PC-9 (cell line): ENCODE measurements at regions of chr7 and their contacts with region 1.

Region 1: DNA sequence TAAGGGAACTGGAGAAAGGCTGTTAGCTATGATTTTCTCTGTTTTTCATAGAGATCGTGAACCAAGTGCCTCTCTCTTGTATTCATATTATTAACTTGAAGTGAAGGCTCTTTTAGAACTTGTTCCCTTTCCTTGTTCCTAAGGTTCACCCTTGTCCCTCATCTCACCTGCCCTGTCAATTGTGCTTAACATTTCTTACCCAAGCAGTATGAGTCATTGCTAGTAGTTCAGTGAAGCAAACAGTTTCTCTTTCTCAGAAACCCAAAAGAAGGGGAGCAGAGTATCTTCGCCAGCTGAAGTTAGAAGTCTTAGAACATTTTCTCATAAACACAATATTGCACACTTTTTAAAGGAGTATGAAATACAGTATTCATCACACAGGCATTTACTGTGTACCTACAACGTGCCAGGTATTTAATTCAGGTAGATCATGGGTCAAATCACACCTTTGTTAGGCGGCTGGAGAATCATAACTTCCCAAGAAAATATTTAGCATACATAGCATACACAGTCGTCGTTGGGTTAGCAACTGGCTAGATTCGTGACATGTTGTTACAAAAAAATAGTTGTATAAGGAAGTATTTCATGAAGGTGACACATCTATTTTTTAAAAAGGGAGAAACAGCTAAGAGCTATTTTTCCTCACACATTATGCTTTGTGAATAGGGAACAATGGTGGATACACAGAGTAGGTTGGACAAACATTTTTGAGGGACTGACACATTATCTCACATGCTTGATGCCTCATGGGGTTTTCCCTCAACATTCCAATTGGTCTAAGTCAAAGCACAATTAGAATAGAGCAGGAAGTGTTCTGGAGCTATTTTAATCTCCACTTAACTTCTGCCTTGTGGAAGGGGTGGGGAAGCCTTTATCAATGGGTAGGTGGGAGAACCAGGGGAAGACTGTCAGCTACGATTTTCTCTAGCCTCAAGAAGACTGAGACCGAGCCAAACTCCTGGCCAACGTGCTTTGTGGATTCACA is 13.2 kb downstream of the HDAC9 start:
- DNase-seq: peak; percentile 59 to 99
- H3K4me3 ChIP-seq: peak overlapping the region; percentile 59
- H3K27ac ChIP-seq: peak overlapping the region; percentile 98
- H3K4me1 ChIP-seq: peaks cover 37% of the 10 kb centered on the region
- H3K27me3 ChIP-seq: no peaks in the 10 kb centered on the region
- CTCF ChIP-seq: no peak; the same call in 1 of the 2 replicates

Region 2: GRCh38 chr7:18408461-18408860 is 100.3 kb before region 1 on chr7:
- CTCF ChIA-PET with region 1: no interaction called
- POLR2A ChIA-PET with region 1: interaction called, 10 read pairs
- intact Hi-C with region 1: no loop called
- DNase-seq: peak in 1 of 2 experiments; percentile 67
- H3K4me3 ChIP-seq: no peak overlapping the region
- H3K27ac ChIP-seq: no peak overlapping the region
- H3K4me1 ChIP-seq: no peaks in the 10 kb centered on the region
- H3K27me3 ChIP-seq: no peaks in the 10 kb centered on the region
- CTCF ChIP-seq: no peak

Region 3: GRCh38 chr7:18495412-18496340 is 13.1 kb before region 1 on chr7 and contains the start of gene HDAC9:
- CTCF ChIA-PET with region 1: no interaction called
- POLR2A ChIA-PET with region 1: interaction called, 4 read pairs
- intact Hi-C with region 1: loop called (anchors 1 kb)
- DNase-seq: peak in 1 of 2 experiments; percentile 37
- H3K4me3 ChIP-seq: peak within 1 kb of the TSS; percentile 5; the same call in 1 of the 2 replicates
- H3K27ac ChIP-seq: no peak within 1 kb of the TSS
- H3K4me1 ChIP-seq: no peaks in the 10 kb centered on the region
- H3K27me3 ChIP-seq: no peaks in the 10 kb centered on the region
- CTCF ChIP-seq: no peak
- total RNA-seq, gene HDAC9: 14.7 TPM in 2 replicates

Region 4: DNA sequence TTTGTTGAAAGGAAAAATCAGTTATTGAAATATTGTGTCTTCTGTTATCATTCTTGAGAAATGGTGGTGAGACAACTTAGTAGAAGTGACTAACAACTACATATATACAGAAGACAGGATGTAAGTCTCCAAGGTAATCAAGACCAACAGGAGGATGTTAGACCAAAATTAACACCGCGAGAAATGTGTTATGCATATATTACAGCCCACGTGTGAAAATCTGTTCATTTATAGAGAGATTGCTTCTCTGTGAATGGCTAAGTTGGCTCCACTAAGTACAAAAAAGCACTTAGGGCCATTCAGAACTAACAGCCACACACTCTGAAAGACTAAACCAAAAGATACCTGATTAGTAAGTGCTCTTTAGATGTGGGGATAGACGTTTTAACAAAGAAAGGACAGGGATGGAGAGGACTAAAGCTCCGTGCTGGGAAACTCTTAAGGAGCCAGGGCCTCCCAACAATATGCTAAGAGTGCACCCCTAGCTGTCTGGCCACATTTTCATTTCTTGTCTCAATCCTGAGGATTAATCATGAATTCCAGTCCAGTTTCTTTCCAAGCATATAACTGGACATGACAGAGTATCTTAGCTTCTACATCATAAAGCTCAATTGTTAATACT is 13.3 kb after region 1 on chr7:
- CTCF ChIA-PET with region 1: no interaction called
- POLR2A ChIA-PET with region 1: interaction called, 15 read pairs
- intact Hi-C with region 1: no loop called
- DNase-seq: no peak
- H3K4me3 ChIP-seq: no peak overlapping the region
- H3K27ac ChIP-seq: no peak overlapping the region
- H3K4me1 ChIP-seq: no peaks in the 10 kb centered on the region
- H3K27me3 ChIP-seq: no peaks in the 10 kb centered on the region
- CTCF ChIP-seq: no peak

Region 5: GRCh38 chr7:18570890-18571478 is 62.2 kb after region 1 on chr7:
- CTCF ChIA-PET with region 1: interaction called, 13 read pairs
- POLR2A ChIA-PET with region 1: interaction called, 4 read pairs
- intact Hi-C with region 1: no loop called
- DNase-seq: peak in 1 of 2 experiments; percentile 63
- H3K4me3 ChIP-seq: no peak overlapping the region
- H3K27ac ChIP-seq: no peak overlapping the region
- H3K4me1 ChIP-seq: no peaks in the 10 kb centered on the region
- H3K27me3 ChIP-seq: no peaks in the 10 kb centered on the region
- CTCF ChIP-seq: peak; percentile 78

Region 6: GRCh38 chr7:18815261-18815960 is 306.7 kb after region 1 on chr7:
- CTCF ChIA-PET with region 1: no interaction called
- POLR2A ChIA-PET with region 1: no interaction called
- intact Hi-C with region 1: no loop called
- DNase-seq: no peak
- H3K4me3 ChIP-seq: no peak overlapping the region
- H3K27ac ChIP-seq: no peak overlapping the region
- H3K4me1 ChIP-seq: no peaks in the 10 kb centered on the region
- H3K27me3 ChIP-seq: no peaks in the 10 kb centered on the region
- CTCF ChIP-seq: no peak